Heart right ventricle (tissue), 16 donors: ENCODE measurements at regions of chr19 and their contacts with region 1.

Region 1: DNA sequence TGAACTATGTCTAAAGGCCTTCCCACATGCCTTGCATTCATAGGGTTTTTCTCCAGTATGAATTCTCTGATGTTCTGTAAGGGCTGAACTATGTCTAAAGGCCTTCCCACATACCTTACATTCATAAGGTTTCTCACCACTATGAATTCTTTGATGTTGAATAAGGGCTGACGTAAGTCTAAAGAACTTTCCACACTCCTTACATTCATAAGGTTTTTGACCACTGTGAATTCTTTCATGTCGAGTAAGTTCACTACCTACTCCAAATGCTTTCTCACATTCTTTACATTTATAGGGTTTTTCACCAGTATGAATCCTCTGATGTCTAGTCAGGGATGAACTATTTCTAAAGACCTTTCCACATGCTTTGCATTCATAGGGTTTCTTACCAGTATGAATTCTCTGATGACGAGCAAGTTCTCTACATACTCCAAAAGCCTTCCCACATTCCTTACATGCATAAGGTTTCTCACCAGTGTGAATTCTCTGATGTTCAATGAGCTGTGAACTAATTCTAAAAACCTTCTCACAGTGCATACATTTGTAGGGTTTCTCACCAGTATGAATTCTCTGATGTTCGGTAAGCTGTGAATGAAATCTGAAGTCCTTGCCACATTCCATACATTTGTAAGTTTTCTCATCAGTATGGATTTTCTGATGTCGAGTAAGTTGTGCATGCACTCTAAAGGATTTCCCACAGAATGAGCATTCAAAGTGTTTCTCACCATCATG is 19.1 kb upstream of the ZNF260 start:
- DNase-seq: no peak
- ATAC-seq: no peak
- H3K4me3 ChIP-seq: no peak overlapping the region
- H3K27ac ChIP-seq: no peak overlapping the region
- H3K4me1 ChIP-seq: no peaks in the 10 kb centered on the region
- H3K27me3 ChIP-seq: no peaks in the 10 kb centered on the region
- CTCF ChIP-seq: no peak

Region 2: DNA sequence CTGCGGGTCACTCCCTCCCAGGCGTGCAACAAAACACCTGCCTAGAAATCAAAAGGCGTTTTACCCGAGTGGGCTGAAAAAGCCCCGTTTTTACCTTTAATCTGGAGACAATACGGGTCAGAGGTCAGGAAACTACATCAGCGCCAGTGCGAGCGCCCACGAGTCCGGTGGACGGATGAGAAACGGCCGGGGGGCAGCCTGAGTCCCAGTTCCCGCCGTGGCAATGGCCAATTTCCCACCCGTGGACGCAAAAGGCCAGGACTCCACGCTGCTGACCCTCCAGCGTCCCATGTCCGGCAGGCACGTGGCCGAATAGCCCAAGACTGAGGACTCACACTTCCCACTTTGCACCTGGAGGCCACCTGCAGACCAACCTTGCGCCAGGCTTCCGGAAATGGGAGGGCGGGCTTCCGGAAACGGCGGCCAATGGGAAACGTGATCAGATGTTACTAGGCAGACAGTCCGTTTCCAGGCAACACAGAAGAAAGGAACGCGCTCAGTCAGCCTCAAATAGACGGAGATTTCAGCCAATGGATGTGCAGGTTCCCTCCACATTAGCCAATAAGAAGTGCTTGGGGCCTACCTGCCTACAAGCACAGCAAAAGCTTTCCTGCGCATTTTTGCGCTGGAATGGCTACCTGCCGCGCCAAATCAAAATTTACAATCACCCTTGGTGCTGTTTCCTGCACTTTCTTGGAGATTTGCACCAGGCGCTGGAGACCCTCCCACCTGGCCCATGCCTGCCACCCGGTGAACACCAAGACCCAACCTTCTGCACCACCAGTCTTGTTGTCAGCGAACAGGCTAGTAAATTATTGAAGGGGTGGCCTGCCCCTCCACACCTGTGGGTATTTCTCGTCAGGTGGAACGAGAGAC is 215.6 kb before region 1 on chr19:
- intact Hi-C with region 1: no loop called
- DNase-seq: peak; percentile 80 to 93
- ATAC-seq: peak; percentile 97 to 100 (median 100)
- H3K4me3 ChIP-seq: peak overlapping the region; percentile 42 to 92 (median 80)
- H3K27ac ChIP-seq: peak overlapping the region in 7 of 10 donors; percentile 27 to 74 (median 42)
- H3K4me1 ChIP-seq: peaks cover 0 to 20% (median 10%) of the 10 kb centered on the region in 9 donors
- H3K27me3 ChIP-seq: no peaks in the 10 kb centered on the region
- CTCF ChIP-seq: peak in 2 of 9 donors; percentile 8 to 28

Region 3: DNA sequence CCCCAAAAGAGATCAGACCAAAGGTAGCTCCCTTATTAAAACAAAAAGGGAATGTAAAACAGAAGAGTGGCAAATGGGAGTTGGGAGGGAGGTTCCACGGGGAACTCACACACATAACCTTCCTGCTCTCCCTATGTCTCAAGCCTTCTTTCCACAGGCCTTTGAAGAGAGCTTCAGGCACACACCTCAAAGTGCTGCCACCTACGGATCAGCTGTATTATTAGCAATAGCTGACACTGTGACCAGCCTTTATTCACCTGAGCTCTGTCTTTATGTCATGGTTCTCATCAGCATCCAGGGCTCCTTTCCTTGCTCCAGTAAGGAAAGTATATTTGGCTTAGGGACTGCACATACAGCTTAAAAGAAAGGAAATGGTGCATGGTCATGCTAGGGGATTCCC is 1036.2 kb after region 1 on chr19:
- intact Hi-C with region 1: loop called in 1 of 10 experiments (anchors 10 kb)
- DNase-seq: no peak
- ATAC-seq: no peak
- H3K4me3 ChIP-seq: no peak overlapping the region
- H3K27ac ChIP-seq: no peak overlapping the region
- H3K4me1 ChIP-seq: no peaks in the 10 kb centered on the region
- H3K27me3 ChIP-seq: no peaks in the 10 kb centered on the region
- CTCF ChIP-seq: no peak